Prostate gland (tissue), 2 donors: ENCODE measurements at regions of chr20 and their contacts with region 1.

Region 1: GRCh38 chr20:47785854-47786764 is 828 bp upstream of the SULF2 start:
- DNase-seq: peak; percentile 68
- H3K4me3 ChIP-seq: peak overlapping the region; percentile 40 to 44
- H3K27ac ChIP-seq: peak overlapping the region; percentile 66
- H3K4me1 ChIP-seq: peaks cover 9% of the 10 kb centered on the region
- H3K27me3 ChIP-seq: no peaks in the 10 kb centered on the region
- CTCF ChIP-seq: peak; percentile 39 to 79 (median 60)
- POLR2A ChIP-seq: no peak

Region 2: DNA sequence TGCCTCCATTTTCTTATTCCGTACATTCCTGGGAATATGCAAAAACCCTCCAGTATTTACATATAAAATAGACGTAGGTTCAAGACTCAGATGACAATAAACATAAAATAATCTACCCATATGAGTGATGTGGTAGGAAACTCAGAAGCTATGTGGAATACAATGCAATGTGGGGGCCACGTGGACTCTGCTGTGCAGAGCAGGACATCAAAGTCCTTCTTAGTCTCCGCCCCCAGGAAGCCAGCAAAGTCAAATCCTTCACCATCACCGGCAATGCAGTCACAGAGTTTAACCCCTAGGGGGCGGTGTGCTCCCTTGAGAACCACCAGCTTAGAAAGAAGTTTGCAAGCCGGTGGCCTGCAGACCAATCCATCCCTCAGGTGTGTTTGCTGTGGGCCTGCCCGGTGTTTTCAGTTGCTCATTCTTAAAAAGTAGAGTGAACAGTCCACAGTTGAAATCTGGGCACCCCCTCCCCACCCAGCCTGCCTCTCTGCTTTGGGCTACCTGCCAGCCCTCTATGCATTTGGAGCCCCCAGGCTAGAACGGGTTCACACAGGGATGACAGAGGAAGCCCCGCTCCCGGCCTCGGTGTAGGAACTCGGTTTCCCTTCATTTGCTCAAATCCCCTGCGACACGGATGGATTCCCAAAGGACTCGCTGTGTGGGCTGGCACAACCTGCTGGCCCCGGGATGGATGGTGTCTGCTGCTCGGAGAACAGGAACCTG is 60.7 kb before region 1 on chr20:
- intact Hi-C with region 1: loop called (anchors 5 kb)
- DNase-seq: peak; percentile 65
- H3K4me3 ChIP-seq: no peak overlapping the region
- H3K27ac ChIP-seq: no peak overlapping the region
- H3K4me1 ChIP-seq: no peaks in the 10 kb centered on the region
- H3K27me3 ChIP-seq: no peaks in the 10 kb centered on the region
- CTCF ChIP-seq: peak; percentile 75 to 87 (median 83)
- POLR2A ChIP-seq: no peak

Region 3: GRCh38 chr20:47929363-47930123 is 143.4 kb after region 1 on chr20:
- intact Hi-C with region 1: loop called (anchors 5 kb)
- DNase-seq: no peak
- H3K4me3 ChIP-seq: no peak overlapping the region
- H3K27ac ChIP-seq: no peak overlapping the region
- H3K4me1 ChIP-seq: no peaks in the 10 kb centered on the region
- H3K27me3 ChIP-seq: peaks cover 3% of the 10 kb centered on the region
- CTCF ChIP-seq: no peak
- POLR2A ChIP-seq: no peak

Region 4: GRCh38 chr20:48188657-48189551 is 402.8 kb after region 1 on chr20:
- intact Hi-C with region 1: loop called (anchors 5 kb)
- DNase-seq: peak; percentile 34
- H3K4me3 ChIP-seq: no peak overlapping the region
- H3K27ac ChIP-seq: no peak overlapping the region
- H3K4me1 ChIP-seq: no peaks in the 10 kb centered on the region
- H3K27me3 ChIP-seq: no peaks in the 10 kb centered on the region
- CTCF ChIP-seq: peak in 3 of 4 experiments; percentile 24 to 53 (median 45)
- POLR2A ChIP-seq: no peak

Region 5: DNA sequence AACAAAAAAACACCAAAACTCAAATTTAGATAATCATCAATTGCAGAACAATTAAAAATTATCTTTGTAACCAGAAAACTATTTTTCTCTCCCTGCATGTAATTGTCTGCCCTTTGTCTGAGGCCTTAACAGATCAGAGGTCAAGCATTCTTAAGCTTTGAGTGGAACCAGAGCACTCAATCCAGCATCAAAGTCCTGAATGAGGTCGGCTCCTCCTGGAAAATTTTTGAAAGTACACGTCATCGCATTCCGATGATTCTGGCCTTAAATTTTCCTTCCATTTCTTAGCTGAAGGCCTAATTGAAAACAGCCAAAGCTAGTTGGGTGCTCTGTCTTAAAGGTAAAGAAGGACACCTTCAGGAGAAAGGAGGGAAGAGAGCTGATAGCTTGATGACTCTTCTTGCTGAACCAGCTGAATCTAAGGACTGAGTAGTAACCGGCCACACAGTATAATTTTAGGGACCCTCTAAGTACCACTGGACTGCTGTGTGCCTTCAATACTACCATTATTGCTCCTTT is 509.4 kb after region 1 on chr20:
- intact Hi-C with region 1: loop called (anchors 5 kb)
- DNase-seq: no peak
- H3K4me3 ChIP-seq: no peak overlapping the region
- H3K27ac ChIP-seq: no peak overlapping the region
- H3K4me1 ChIP-seq: no peaks in the 10 kb centered on the region
- H3K27me3 ChIP-seq: no peaks in the 10 kb centered on the region
- CTCF ChIP-seq: peak in 2 of 4 experiments; percentile 33 to 34
- POLR2A ChIP-seq: no peak

Region 6: DNA sequence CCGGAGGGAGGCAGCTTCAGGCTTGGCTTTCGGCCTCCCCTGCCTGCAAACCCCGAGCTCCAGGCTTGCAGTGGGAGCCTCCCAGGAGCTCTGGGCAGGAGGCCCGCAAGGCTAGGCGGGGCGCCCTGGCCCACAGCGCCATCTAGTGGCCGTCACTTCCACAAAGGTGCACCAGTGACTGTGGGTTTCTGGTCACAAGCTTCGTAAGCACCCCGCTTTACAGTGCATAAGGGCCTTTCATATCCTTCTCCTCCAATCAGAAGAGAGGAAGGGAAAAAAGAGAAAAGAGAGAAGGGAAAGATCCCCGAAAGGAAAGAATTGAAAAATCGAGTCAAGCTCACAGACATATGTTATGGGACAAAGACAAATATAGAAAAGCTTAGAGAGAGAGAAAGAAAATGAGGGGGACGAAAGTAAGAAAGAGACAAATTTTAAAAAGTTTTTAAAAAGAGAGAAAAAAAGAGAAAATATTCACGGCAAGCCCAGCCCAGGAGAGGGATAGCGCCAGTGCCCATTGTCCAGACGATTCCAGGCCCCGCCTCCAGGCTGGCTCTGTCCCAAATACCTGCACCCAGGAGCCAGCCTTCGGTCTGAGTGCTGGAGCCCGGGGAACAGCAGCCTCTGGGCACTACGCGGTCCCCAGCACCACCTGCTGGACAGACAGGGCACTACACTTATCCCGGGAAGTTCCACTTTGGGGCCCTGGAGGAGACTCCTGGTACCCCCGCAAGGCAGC is 834.6 kb after region 1 on chr20:
- intact Hi-C with region 1: loop called (anchors 1 kb)
- DNase-seq: peak; percentile 88
- H3K4me3 ChIP-seq: peak overlapping the region in 1 of 2 donors; percentile 21
- H3K27ac ChIP-seq: no peak overlapping the region
- H3K4me1 ChIP-seq: peaks cover 2% of the 10 kb centered on the region
- H3K27me3 ChIP-seq: no peaks in the 10 kb centered on the region
- CTCF ChIP-seq: peak; percentile 80 to 97 (median 93)
- POLR2A ChIP-seq: no peak